IMR-90 (cell line): ENCODE measurements at regions of chr1 and their contacts with region 1.

Region 1: GRCh38 chr1:26035959-26036755 is 9.8 kb downstream of the SLC30A2 start:
- DNase-seq: peak; percentile 53
- ATAC-seq: peak; percentile 94
- H3K4me3 ChIP-seq: peak overlapping the region; percentile 66
- H3K27ac ChIP-seq: no peak overlapping the region
- H3K4me1 ChIP-seq: peaks cover 6% of the 10 kb centered on the region
- H3K27me3 ChIP-seq: peaks cover 17% of the 10 kb centered on the region; the same call in 1 of the 2 replicates
- CTCF ChIP-seq: peak; percentile 96
- POLR2A ChIP-seq: no peak
- RAD21 ChIP-seq: peak; percentile 88

Region 2: GRCh38 chr1:26072305-26072704 is 36.1 kb after region 1 on chr1:
- CTCF ChIA-PET with region 1: no interaction called
- POLR2A ChIA-PET with region 1: no interaction called
- dilution Hi-C with region 1: no loop called
- in situ Hi-C with region 1: no loop called
- intact Hi-C with region 1: no loop called
- DNase-seq: no peak
- ATAC-seq: no peak
- H3K4me3 ChIP-seq: no peak overlapping the region
- H3K27ac ChIP-seq: no peak overlapping the region
- H3K4me1 ChIP-seq: no peaks in the 10 kb centered on the region
- H3K27me3 ChIP-seq: peaks cover 62% of the 10 kb centered on the region
- CTCF ChIP-seq: no peak
- POLR2A ChIP-seq: no peak
- RAD21 ChIP-seq: no peak

Region 3: GRCh38 chr1:26145041-26145959 is 109.1 kb after region 1 on chr1:
- CTCF ChIA-PET with region 1: interaction called, 9 read pairs
- POLR2A ChIA-PET with region 1: no interaction called
- dilution Hi-C with region 1: no loop called
- in situ Hi-C with region 1: loop called (anchors 5 kb)
- intact Hi-C with region 1: loop called (anchors 1 kb)
- DNase-seq: peak; percentile 80
- ATAC-seq: peak; percentile 97
- H3K4me3 ChIP-seq: no peak overlapping the region
- H3K27ac ChIP-seq: no peak overlapping the region
- H3K4me1 ChIP-seq: no peaks in the 10 kb centered on the region
- H3K27me3 ChIP-seq: peaks cover 27% of the 10 kb centered on the region
- CTCF ChIP-seq: peak; percentile 72
- POLR2A ChIP-seq: no peak
- RAD21 ChIP-seq: peak; percentile 77

Region 4: DNA sequence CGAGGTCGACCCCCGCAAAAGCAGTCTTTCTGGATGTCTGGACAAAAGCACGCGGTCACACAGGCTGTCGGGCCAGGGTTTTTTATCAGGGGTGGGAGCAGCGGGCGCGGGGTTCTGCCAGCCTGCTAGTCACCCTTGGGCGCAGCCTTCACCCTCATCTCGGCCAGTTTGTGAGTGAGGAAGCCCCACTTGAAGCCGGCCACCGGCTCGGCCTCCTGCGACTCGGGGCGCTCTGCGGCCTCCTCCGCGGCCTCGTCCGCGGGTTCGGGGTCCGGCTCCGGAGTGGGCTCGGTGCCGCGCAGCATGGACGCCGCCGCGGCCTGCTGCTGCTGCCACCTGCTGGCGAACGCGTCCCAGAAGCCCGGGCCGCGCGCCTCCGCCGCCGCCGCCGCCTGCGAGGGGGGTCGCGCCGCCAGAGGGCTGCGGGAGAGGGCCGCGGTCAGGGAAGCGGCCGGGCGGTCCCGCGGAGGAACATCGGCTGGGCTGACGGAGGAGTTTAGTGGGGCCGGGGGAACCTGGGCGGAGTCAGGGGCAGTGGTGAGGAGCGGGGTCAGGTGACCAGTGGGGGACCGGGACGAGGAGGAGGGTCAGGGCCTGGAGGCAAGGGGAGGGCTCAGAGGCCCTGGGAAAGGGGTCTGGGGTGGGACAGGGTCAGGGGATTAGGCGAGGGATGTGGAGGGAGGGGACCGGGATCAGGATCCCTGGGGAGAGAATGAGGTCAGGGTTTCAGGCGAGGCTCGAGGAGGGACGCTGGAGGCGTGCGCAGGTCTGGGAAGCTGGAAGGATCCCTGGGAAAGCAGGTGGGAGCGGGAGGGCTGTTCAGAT is 128.1 kb after region 1 on chr1:
- CTCF ChIA-PET with region 1: interaction called, 3 read pairs
- POLR2A ChIA-PET with region 1: no interaction called
- dilution Hi-C with region 1: no loop called
- in situ Hi-C with region 1: no loop called
- intact Hi-C with region 1: loop called (anchors 1 kb)
- DNase-seq: no peak
- ATAC-seq: peak; percentile 70
- H3K4me3 ChIP-seq: peak overlapping the region; percentile 26
- H3K27ac ChIP-seq: no peak overlapping the region
- H3K4me1 ChIP-seq: peaks cover 4% of the 10 kb centered on the region
- H3K27me3 ChIP-seq: peaks cover 16% of the 10 kb centered on the region; the same call in 1 of the 2 replicates
- CTCF ChIP-seq: peak; percentile 62
- POLR2A ChIP-seq: no peak
- RAD21 ChIP-seq: peak; percentile 38; the same call in 1 of the 2 replicates

Region 5: DNA sequence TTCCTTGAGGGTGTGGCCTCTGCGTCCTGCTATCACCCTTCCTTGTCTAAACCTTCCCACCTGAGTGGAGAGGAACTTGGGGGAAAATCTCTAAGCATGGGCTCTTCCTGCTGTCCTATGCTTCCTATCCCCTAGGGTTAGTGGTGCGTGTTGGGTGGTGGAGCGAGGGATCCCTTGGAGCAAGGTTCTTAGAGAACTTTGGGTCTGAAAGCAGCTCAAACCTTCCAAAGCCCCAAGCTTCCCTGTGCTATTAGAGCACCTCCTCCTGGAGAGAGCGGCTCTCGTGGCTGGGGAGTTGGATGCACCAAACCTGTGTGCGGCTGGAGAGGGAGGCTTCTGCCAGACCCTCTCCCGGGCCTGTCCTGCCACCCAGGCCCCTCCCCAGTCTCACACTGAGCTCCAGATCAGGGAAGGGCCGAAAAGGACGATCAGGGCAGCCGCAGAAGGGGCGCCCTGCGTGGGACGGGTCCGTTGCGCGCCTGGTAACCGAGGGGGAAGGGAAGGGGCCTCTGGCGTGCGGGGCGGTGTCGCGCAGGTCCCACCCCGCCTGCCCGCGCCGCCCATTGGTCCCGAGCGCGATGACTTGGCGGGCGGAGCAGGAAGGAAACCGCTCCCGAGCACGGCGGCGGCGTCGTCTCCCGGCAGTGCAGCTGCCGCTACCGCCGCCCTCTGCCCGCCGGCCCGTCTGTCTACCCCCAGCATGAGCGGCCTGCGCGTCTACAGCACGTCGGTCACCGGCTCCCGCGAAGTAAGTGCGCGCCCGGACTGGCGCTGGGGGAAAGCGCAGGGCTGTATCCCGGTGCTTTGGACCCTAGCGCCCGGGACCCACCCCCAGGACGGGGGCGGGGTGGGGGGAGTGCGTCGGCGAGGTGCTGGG is 243.5 kb after region 1 on chr1 and contains the start of gene SH3BGRL3:
- CTCF ChIA-PET with region 1: no interaction called
- POLR2A ChIA-PET with region 1: no interaction called
- dilution Hi-C with region 1: no loop called
- in situ Hi-C with region 1: no loop called
- intact Hi-C with region 1: loop called (anchors 5 kb)
- DNase-seq: peak; percentile 75
- ATAC-seq: peak; percentile 68
- H3K4me3 ChIP-seq: peak within 1 kb of the TSS; percentile 89
- H3K27ac ChIP-seq: peak within 1 kb of the TSS; percentile 95
- H3K4me1 ChIP-seq: peaks cover 64% of the 10 kb centered on the region
- H3K27me3 ChIP-seq: no peaks in the 10 kb centered on the region
- CTCF ChIP-seq: peak; percentile 46
- POLR2A ChIP-seq: peak; percentile 93
- RAD21 ChIP-seq: no peak; the same call in 1 of the 2 replicates
- total RNA-seq, gene SH3BGRL3: 32.2 and 35.0 TPM in 2 replicates

Region 6: DNA sequence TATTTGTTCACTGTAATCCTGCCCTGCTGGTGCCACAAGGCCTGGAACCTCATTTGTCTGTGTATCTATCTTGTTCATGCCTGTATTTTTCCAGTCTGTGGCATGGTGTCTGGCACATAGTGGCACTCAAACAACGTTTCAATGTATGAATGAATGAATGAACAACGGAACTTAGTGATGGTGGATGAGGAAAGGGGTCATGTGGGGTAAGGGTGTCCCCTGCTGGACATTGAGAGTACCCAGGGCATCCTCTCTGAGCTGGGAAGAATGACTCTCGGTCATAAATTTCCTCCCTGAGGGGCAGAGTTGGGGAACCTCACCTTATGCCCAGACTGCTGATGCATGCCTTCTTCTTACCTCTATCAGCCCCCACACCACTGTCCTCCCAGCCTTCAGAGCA is 355.3 kb after region 1 on chr1:
- CTCF ChIA-PET with region 1: no interaction called
- POLR2A ChIA-PET with region 1: no interaction called
- dilution Hi-C with region 1: no loop called
- in situ Hi-C with region 1: no loop called
- intact Hi-C with region 1: loop called (anchors 2 kb)
- DNase-seq: peak; percentile 59
- ATAC-seq: peak; percentile 94
- H3K4me3 ChIP-seq: no peak overlapping the region
- H3K27ac ChIP-seq: no peak overlapping the region
- H3K4me1 ChIP-seq: no peaks in the 10 kb centered on the region
- H3K27me3 ChIP-seq: peaks cover 2% of the 10 kb centered on the region; the same call in 1 of the 2 replicates
- CTCF ChIP-seq: peak; percentile 90
- POLR2A ChIP-seq: no peak
- RAD21 ChIP-seq: peak; percentile 94